Endothelial cell of umbilical vein (primary cell): ENCODE measurements at regions of chr2 and their contacts with region 1.

Region 1: GRCh38 chr2:100610381-100610831 is 47.6 kb downstream of the PDCL3 start:
- DNase-seq: peak; percentile 60
- H3K4me3 ChIP-seq: no peak overlapping the region
- H3K27ac ChIP-seq: no peak overlapping the region
- H3K4me1 ChIP-seq: no peaks in the 10 kb centered on the region
- H3K27me3 ChIP-seq: no peaks in the 10 kb centered on the region
- CTCF ChIP-seq: peak; percentile 64 to 88
- POLR2A ChIP-seq: no peak

Region 2: DNA sequence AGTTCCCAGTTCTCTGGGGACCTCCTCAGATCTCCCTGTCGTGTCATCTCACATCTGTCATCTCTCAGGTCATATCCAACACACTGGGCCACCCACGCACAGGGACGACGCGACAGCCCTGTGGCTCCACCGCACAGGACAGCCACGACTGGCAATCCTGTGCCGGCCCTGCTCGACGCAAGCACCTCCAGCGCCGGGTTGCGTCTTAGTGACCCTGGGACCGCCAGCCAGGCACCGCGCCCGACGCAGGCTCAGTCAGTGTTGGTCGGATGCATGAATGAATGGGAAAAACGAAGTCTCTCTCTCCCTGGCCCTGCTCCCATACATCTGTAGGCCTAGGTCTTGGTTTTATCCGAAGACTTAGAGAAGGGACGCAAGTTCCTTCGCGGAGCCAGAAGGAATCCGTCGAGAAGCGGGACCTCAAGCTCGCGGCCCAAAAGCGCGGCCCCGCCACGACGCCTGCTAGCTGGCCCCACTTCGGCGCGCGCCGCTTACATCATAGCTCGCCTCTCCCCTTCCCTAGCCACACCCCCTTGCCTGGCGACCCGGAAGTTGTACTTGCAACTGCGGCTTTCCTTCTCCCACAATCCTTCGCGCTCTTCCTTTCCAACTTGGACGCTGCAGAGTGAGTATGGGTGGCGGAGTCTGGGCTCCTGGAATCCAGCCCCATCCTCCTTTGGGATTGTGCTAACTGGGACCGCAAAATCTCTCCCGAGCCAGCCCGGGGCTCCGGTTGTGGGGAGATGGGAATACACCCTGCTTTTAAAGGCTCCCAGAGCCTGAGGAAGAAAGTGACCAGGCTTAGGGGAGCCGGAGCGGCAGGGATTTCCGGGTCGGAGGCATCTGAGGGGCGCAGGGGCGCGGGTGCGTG is 391.5 kb after region 1 on chr2 and contains the start of gene RPL31:
- CTCF ChIA-PET with region 1: interaction called, 16 read pairs
- POLR2A ChIA-PET with region 1: interaction called, 3 read pairs
- dilution Hi-C with region 1: no loop called
- intact Hi-C with region 1: loop called (anchors 1 kb)
- DNase-seq: peak; percentile 95
- H3K4me3 ChIP-seq: peak within 1 kb of the TSS; percentile 82 to 94 (median 90)
- H3K27ac ChIP-seq: peak within 1 kb of the TSS; percentile 76
- H3K4me1 ChIP-seq: peaks cover 24% of the 10 kb centered on the region
- H3K27me3 ChIP-seq: no peaks in the 10 kb centered on the region
- CTCF ChIP-seq: no peak
- POLR2A ChIP-seq: peak; percentile 99
- total RNA-seq, gene RPL31: 1,337 and 1,355 TPM in 2 replicates